ENCODE measurements at regions of chr5 and their contacts with region 1.

Region 1: GRCh38 chr5:177494346-177495195 is 2.8 kb downstream of the PDLIM7 start:
- DNase-seq: no peak
- H3K4me3 ChIP-seq: peak overlapping the region; percentile 2 to 75 (median 74)
- H3K27ac ChIP-seq: peak overlapping the region; percentile 85 to 94
- H3K4me1 ChIP-seq: peaks cover 0 to 16% of the 10 kb centered on the region in 2 donors
- H3K27me3 ChIP-seq: no peaks in the 10 kb centered on the region
- CTCF ChIP-seq: no peak
- POLR2A ChIP-seq: no peak

Region 2: GRCh38 chr5:177382423-177383029 is 112.0 kb before region 1 on chr5:
- intact Hi-C with region 1: no loop called
- DNase-seq: no peak
- H3K4me3 ChIP-seq: no peak overlapping the region
- H3K27ac ChIP-seq: no peak overlapping the region
- H3K4me1 ChIP-seq: no peaks in the 10 kb centered on the region
- H3K27me3 ChIP-seq: no peaks in the 10 kb centered on the region
- CTCF ChIP-seq: no peak
- POLR2A ChIP-seq: no peak

Region 3: DNA sequence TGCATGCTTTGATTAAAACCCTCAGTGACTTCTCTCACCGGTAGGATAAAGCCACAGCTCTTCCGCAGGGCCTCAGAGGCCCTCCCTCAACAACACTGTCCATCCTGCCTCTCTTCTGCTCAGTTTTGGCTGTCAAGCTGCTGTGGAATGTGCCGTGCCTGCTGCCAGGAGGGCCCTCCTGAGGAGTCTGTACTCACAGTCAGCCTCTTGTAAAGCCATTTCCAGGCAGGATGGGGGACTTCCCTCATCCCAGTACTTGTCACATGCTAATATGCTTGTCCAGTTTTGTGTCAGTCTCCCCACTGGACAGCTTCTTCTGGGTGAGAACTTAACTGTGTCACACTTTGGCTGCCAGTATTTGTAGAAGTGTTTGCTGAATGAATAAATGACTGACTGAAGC is 36.1 kb after region 1 on chr5:
- intact Hi-C with region 1: loop called (anchors 1 kb)
- DNase-seq: peak in 1 of 2 donors; percentile 0
- H3K4me3 ChIP-seq: no peak overlapping the region
- H3K27ac ChIP-seq: no peak overlapping the region
- H3K4me1 ChIP-seq: no peaks in the 10 kb centered on the region
- H3K27me3 ChIP-seq: no peaks in the 10 kb centered on the region
- CTCF ChIP-seq: no peak
- POLR2A ChIP-seq: no peak